Pancreas (tissue), 10 donors: ENCODE measurements at regions of chr1 and their contacts with region 1.

Region 1: GRCh38 chr1:114346480-114347029 is 164.4 kb downstream of the TRIM33 start:
- DNase-seq: peak; percentile 89 to 100 (median 98)
- ATAC-seq: peak; percentile 100
- H3K4me3 ChIP-seq: peak overlapping the region; percentile 28 to 60 (median 41)
- H3K27ac ChIP-seq: peak overlapping the region in 3 of 4 donors; percentile 35 to 56 (median 44)
- H3K4me1 ChIP-seq: no peaks in the 10 kb centered on the region
- H3K27me3 ChIP-seq: no peaks in the 10 kb centered on the region
- CTCF ChIP-seq: peak in 3 of 4 donors; percentile 100

Region 2: DNA sequence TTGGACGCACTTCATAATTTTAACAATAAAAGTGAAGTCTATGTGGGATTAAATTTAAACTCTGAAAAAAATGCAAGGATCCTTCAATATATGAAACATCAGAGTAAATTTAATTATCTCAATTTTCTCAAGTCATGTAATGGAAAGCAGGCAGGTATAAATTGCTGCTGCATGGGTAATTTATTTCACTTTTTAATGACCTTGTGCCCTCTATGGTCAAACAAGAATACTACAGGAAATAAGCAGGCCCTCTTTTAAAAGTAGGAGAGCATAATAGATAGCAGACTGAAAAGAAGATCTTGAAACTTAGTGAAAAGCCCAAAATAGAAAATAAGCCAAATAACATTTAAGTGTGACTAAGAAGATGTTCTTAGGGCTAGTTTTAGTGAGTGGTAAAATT is 212.0 kb after region 1 on chr1:
- intact Hi-C with region 1: loop called in 1 of 3 experiments (anchors 10 kb)
- DNase-seq: no peak
- ATAC-seq: peak in 3 of 4 donors; percentile 52 to 65 (median 64)
- H3K4me3 ChIP-seq: no peak overlapping the region
- H3K27ac ChIP-seq: no peak overlapping the region
- H3K4me1 ChIP-seq: no peaks in the 10 kb centered on the region
- H3K27me3 ChIP-seq: no peaks in the 10 kb centered on the region
- CTCF ChIP-seq: no peak